Activated B cell treated with CpG ODN at 0.5 μM for 24 hours (primary cell): ENCODE measurements at regions of chr20 and their contacts with region 1.

Region 1: DNA sequence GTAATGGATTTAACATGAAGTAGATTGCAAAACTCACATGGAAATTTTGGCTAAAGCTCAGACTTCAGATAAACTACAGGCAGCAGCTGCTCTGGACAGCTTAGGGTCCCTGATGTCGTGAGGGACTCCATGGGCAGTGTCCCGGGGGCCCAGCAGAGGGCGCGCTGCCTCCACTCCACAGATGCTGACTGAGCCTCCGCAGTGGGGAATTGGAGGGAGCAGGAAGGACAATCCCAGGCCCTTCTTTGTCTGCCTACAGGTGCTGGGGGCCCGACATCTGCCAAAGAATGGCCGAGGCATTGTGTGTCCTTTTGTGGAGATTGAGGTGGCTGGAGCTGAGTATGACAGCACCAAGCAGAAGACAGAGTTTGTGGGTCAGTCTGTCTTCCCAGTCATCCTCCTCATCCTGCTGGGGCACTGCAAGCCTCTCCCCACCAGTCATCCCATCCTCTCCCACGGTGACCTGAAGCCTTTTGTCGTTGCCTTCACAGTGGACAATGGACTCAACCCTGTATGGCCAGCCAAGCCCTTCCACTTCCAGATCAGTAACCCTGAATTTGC is 35.9 kb downstream of the PLCG1 start:
- DNase-seq: peak; percentile 67
- ATAC-seq: peak; percentile 95
- H3K4me3 Mint-ChIP-seq: no peak overlapping the region
- H3K27ac Mint-ChIP-seq: no peak overlapping the region
- H3K4me1 Mint-ChIP-seq: no peaks in the 10 kb centered on the region
- H3K27me3 Mint-ChIP-seq: no peaks in the 10 kb centered on the region
- CTCF ChIP-seq: peak; percentile 46

Region 2: GRCh38 chr20:41154436-41155176 is 18.6 kb before region 1 on chr20:
- CTCF ChIA-PET with region 1: interaction called, 24 read pairs
- POLR2A ChIA-PET with region 1: interaction called, 3 read pairs
- intact Hi-C with region 1: no loop called
- DNase-seq: no peak
- ATAC-seq: no peak
- H3K4me3 Mint-ChIP-seq: no peak overlapping the region
- H3K27ac Mint-ChIP-seq: peak overlapping the region; percentile 80
- H3K4me1 Mint-ChIP-seq: peaks cover 72% of the 10 kb centered on the region
- H3K27me3 Mint-ChIP-seq: no peaks in the 10 kb centered on the region
- CTCF ChIP-seq: no peak

Region 3: DNA sequence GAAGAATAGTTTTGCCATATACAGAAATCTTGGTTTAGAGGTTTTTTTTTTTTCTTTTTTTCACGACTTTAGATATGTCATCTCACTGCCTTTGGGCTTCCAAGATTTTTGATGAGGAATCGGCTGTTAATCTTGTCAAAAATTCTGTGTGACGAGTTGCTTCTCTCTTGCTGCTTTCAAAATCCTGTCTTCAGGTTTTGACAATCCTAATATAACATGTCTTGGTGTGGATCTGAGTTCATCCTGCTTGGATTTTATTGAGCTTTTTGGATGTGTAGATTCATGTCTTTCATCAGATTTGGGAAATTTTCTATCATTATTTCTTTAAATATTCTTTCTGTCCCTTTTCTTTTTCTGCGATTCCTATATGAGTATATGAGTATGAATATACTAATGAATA is 25.2 kb after region 1 on chr20:
- CTCF ChIA-PET with region 1: no interaction called
- POLR2A ChIA-PET with region 1: no interaction called
- intact Hi-C with region 1: no loop called
- DNase-seq: no peak
- ATAC-seq: no peak
- H3K4me3 Mint-ChIP-seq: no peak overlapping the region
- H3K27ac Mint-ChIP-seq: no peak overlapping the region
- H3K4me1 Mint-ChIP-seq: no peaks in the 10 kb centered on the region
- H3K27me3 Mint-ChIP-seq: no peaks in the 10 kb centered on the region
- CTCF ChIP-seq: no peak

Region 4: DNA sequence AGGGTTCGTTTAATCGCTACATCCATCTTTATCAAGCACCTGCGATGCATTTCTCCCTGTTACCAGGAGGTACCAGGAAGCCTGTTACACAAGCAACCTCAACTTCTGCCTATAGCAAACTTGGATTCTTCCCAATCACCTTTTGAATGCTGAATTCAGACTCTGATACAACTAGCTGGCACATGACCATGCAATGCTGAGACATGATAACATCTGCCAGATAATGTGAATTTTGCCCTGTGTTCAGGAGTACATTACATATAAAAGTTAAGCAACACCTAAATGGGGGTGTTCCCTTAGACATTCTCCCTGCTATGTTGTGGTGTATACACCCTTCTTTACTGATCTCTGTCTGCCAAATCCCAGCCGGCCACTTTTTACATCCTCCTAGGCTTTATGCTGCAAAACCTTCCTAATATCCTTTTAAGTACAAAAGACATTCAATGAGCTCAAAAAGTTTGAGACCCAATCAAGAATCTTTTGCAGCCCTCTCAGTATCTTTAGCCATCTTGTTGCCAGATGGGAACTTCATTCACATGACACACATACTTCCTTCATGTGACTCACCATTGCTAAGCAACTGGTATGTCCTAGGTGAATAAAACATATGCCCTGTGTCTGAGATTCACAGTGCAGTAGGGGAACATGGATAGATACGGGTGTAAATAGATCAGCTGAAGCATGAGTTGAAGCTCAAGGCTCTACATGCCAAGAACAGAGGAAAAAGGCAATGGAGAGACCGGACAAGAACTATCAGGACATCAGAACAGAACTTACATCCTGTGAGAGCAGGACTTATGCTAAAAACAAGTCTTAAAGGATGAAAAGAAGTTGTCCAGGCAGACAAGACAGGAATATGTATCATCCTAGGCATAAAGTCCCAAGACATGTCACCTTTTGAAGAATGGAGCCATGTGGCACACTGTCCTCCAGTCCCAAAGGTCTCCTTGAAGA is 60.0 kb after region 1 on chr20:
- CTCF ChIA-PET with region 1: interaction called, 18 read pairs
- POLR2A ChIA-PET with region 1: no interaction called
- intact Hi-C with region 1: loop called (anchors 1 kb)
- DNase-seq: no peak
- ATAC-seq: peak; percentile 56
- H3K4me3 Mint-ChIP-seq: no peak overlapping the region
- H3K27ac Mint-ChIP-seq: peak overlapping the region; percentile 36
- H3K4me1 Mint-ChIP-seq: peaks cover 26% of the 10 kb centered on the region
- H3K27me3 Mint-ChIP-seq: no peaks in the 10 kb centered on the region
- CTCF ChIP-seq: no peak

Region 5: DNA sequence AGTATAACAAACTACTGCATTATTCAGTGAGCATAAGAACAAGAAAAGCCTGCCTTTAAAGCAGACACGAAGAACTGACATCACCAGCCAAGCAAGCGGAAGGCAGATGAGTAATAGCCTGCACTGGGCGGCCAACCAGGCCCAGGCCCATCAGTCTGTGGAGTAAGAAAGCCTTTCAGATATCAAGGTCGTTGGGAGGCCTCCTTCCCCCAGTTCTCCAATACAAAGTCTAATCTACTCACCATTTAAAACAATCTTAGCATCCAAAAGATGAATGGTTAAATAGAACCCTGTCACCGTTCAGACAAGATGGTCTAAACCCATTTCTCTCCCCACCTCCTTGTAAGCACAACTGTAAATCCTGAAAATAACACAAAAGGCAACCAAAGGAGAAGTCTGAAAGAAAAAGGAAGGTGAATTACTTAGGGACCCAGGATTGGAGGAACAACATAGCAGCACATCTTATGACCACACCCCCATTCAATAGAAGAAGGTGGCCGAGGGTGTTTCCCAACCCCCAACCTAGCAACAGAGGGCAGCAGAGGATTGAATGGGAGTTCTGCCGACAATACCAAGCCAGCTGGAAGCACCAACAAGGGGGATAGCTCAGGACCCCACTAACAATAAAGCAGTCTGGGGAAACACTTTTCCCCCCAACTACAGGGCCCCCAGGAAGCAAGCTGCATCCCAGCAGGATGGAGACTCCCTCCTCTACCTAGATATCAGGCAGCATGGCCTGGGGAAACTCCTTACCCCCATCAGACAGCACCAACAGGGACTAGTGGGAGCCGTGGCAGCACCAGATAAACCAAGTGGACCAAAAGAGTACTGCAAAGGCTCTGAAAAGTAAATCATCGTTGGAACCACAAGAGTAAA is 76.4 kb after region 1 on chr20:
- CTCF ChIA-PET with region 1: interaction called, 6 read pairs
- POLR2A ChIA-PET with region 1: no interaction called
- intact Hi-C with region 1: loop called (anchors 5 kb)
- DNase-seq: no peak
- ATAC-seq: peak; percentile 86
- H3K4me3 Mint-ChIP-seq: peak overlapping the region; percentile 56
- H3K27ac Mint-ChIP-seq: peak overlapping the region; percentile 84
- H3K4me1 Mint-ChIP-seq: peaks cover 62% of the 10 kb centered on the region
- H3K27me3 Mint-ChIP-seq: no peaks in the 10 kb centered on the region
- CTCF ChIP-seq: no peak

Region 6: DNA sequence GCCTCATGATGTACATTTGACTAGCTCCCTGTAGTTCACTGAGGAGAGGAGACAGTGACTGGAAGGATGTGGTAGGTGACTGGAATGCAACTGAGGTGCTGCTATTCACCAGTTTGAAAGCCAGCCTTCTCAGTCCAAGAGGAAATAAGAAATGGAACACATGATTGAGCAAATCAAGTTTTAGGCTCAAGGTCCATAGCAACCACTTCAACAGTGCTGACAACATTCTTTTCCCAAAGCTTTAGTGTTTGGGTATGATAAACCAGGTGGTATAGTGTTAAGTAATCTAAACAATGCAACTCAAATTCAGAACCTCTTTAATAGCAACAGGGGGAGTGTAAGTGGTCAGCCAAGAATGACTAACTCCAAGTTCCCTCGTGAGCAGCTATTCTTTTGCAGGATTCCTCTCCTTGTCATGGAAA is 135.1 kb after region 1 on chr20:
- CTCF ChIA-PET with region 1: interaction called, 16 read pairs
- POLR2A ChIA-PET with region 1: no interaction called
- intact Hi-C with region 1: no loop called
- DNase-seq: no peak
- ATAC-seq: no peak
- H3K4me3 Mint-ChIP-seq: no peak overlapping the region
- H3K27ac Mint-ChIP-seq: no peak overlapping the region
- H3K4me1 Mint-ChIP-seq: peaks cover 28% of the 10 kb centered on the region
- H3K27me3 Mint-ChIP-seq: no peaks in the 10 kb centered on the region
- CTCF ChIP-seq: no peak

Region 7: GRCh38 chr20:41411391-41411847 is 238.2 kb after region 1 on chr20:
- CTCF ChIA-PET with region 1: interaction called, 10 read pairs
- POLR2A ChIA-PET with region 1: no interaction called
- intact Hi-C with region 1: loop called (anchors 1 kb)
- DNase-seq: no peak
- ATAC-seq: no peak
- H3K4me3 Mint-ChIP-seq: no peak overlapping the region
- H3K27ac Mint-ChIP-seq: no peak overlapping the region
- H3K4me1 Mint-ChIP-seq: no peaks in the 10 kb centered on the region
- H3K27me3 Mint-ChIP-seq: no peaks in the 10 kb centered on the region
- CTCF ChIP-seq: no peak

Region 8: GRCh38 chr20:41443691-41444090 is 270.4 kb after region 1 on chr20:
- CTCF ChIA-PET with region 1: no interaction called
- POLR2A ChIA-PET with region 1: no interaction called
- intact Hi-C with region 1: no loop called
- DNase-seq: no peak
- ATAC-seq: no peak
- H3K4me3 Mint-ChIP-seq: no peak overlapping the region
- H3K27ac Mint-ChIP-seq: no peak overlapping the region
- H3K4me1 Mint-ChIP-seq: no peaks in the 10 kb centered on the region
- H3K27me3 Mint-ChIP-seq: no peaks in the 10 kb centered on the region
- CTCF ChIP-seq: no peak

Region 9: DNA sequence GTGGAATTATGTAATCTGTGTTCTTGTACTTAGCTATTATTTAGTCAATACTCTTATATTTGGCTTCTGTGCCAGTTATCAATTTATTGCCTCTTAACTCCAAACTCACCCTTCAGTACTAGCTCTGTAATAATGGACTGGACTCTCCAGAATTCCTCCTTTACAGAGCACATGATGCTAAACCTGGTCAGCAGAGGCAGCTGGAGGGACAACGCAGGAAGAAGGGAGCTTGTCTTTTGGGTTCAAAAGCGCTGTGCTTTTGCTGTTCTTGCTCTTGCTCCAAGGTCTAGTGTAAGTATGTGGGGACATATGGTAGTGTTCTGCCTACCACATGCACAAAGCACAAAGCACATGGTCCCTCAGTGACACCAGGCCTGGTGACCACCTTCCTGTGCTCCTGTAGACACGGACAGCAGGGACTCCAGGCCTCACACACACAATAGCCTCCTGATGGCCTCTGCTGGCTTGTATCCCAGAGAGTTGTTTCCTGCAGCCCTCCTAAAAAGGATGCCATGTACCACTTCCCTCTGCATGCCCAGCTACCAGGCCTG is 398.8 kb after region 1 on chr20:
- CTCF ChIA-PET with region 1: no interaction called
- POLR2A ChIA-PET with region 1: no interaction called
- intact Hi-C with region 1: no loop called
- DNase-seq: no peak
- ATAC-seq: no peak
- H3K4me3 Mint-ChIP-seq: no peak overlapping the region
- H3K27ac Mint-ChIP-seq: no peak overlapping the region
- H3K4me1 Mint-ChIP-seq: peaks cover 81% of the 10 kb centered on the region
- H3K27me3 Mint-ChIP-seq: no peaks in the 10 kb centered on the region
- CTCF ChIP-seq: no peak